Activated T-helper 2 cell treated with anti-CD3 and anti-CD28 coated beads, Interferon-gamma antibody, Interleukin-2, Interleukin-4, amounts not matched to agents 10 μg/mL and 5 μg/mL and 100 μg/mL, durations not matched to agents 14 hours and 24 hours and 36 hours (primary cell): ENCODE measurements at regions of chr17 and their contacts with region 1.

Region 1: GRCh38 chr17:7650509-7651096 is at the start of gene ATP1B2:
- DNase-seq: peak; percentile 62
- H3K4me3 Mint-ChIP-seq: peak within 1 kb of the TSS; percentile 78
- H3K27ac Mint-ChIP-seq: no peak within 1 kb of the TSS
- H3K4me1 Mint-ChIP-seq: peaks cover 12% of the 10 kb centered on the region
- H3K27me3 Mint-ChIP-seq: peaks cover 56% of the 10 kb centered on the region
- total RNA-seq, gene ATP1B2: 0.32 and 0.37 TPM in 2 replicates

Region 2: GRCh38 chr17:7589204-7589868 is 61.3 kb before region 1 on chr17:
- intact Hi-C with region 1: no loop called
- DNase-seq: peak; percentile 52
- H3K4me3 Mint-ChIP-seq: no peak overlapping the region
- H3K27ac Mint-ChIP-seq: no peak overlapping the region
- H3K4me1 Mint-ChIP-seq: peaks cover 8% of the 10 kb centered on the region
- H3K27me3 Mint-ChIP-seq: no peaks in the 10 kb centered on the region

Region 3: GRCh38 chr17:7627250-7628121 is 23.1 kb before region 1 on chr17 and contains the start of gene SAT2:
- intact Hi-C with region 1: loop called (anchors 2 kb)
- DNase-seq: peak; percentile 76
- H3K4me3 Mint-ChIP-seq: peak within 1 kb of the TSS; percentile 87
- H3K27ac Mint-ChIP-seq: peak within 1 kb of the TSS; percentile 70
- H3K4me1 Mint-ChIP-seq: peaks cover 17% of the 10 kb centered on the region
- H3K27me3 Mint-ChIP-seq: no peaks in the 10 kb centered on the region
- total RNA-seq, gene SAT2: 25.4 and 27.9 TPM in 2 replicates